ENCODE measurements at regions of chr17 and their contacts with region 1.

Region 1: DNA sequence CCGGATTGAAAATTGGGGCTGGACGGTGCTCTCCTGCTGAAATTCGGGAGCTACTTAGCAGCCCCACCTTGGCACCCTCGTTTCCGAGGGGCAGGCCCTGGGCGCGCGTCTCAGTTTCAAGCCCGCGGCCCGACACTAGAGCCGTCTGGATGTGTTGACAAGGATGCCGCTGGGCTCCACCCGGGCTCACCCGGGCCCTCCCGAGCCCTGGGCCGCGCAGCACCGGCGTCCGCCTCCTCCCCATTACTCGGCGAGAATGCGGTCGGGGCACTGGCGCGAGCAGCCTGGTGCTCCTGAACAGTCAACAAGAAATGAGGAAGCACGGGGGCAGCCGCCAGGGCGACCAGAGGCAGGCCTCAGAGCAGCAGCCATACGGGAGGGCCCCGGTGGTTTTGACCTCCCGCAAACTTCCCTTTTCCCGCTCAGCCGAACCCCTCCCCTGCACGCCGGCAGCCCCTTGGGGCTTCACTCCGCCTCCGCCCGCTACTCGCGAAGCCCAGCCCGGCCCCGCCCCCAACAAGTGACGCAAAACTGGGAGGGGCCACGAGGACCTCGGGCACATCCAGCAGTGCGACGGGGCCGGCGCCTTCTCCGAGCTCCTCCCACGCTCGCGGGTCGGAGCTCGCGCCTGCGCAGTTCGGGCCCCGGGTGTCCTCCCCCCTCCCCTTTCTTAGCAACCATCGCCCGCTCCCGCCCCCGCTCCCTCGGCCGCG is 447 bp upstream of the SEC14L1 start:
- DNase-seq: peak; percentile 96
- ATAC-seq: peak; percentile 97
- H3K4me3 ChIP-seq: peak overlapping the region; percentile 56
- H3K27ac ChIP-seq: peak overlapping the region; percentile 93
- H3K4me1 ChIP-seq: peaks cover 10% of the 10 kb centered on the region
- H3K27me3 ChIP-seq: no peaks in the 10 kb centered on the region
- CTCF ChIP-seq: no peak
- POLR2A ChIP-seq: peak; percentile 84
- RAD21 ChIP-seq: 0 out of 2 replicates have a peak, but pooled peaks have one; percentile 3

Region 2: GRCh38 chr17:77088455-77089123 is 51.7 kb before region 1 on chr17:
- CTCF ChIA-PET with region 1: interaction called, 3 read pairs
- POLR2A ChIA-PET with region 1: interaction called, 11 read pairs
- dilution Hi-C with region 1: no loop called
- in situ Hi-C with region 1: no loop called
- intact Hi-C with region 1: loop called (anchors 2 kb)
- DNase-seq: peak; percentile 98
- ATAC-seq: peak; percentile 95
- H3K4me3 ChIP-seq: peak overlapping the region; percentile 61
- H3K27ac ChIP-seq: peak overlapping the region; percentile 78
- H3K4me1 ChIP-seq: no peaks in the 10 kb centered on the region
- H3K27me3 ChIP-seq: peaks cover 2% of the 10 kb centered on the region; the same call in 1 of the 2 replicates
- CTCF ChIP-seq: peak; percentile 90
- POLR2A ChIP-seq: peak; percentile 62; the same call in 1 of the 2 replicates
- RAD21 ChIP-seq: peak; percentile 56

Region 3: DNA sequence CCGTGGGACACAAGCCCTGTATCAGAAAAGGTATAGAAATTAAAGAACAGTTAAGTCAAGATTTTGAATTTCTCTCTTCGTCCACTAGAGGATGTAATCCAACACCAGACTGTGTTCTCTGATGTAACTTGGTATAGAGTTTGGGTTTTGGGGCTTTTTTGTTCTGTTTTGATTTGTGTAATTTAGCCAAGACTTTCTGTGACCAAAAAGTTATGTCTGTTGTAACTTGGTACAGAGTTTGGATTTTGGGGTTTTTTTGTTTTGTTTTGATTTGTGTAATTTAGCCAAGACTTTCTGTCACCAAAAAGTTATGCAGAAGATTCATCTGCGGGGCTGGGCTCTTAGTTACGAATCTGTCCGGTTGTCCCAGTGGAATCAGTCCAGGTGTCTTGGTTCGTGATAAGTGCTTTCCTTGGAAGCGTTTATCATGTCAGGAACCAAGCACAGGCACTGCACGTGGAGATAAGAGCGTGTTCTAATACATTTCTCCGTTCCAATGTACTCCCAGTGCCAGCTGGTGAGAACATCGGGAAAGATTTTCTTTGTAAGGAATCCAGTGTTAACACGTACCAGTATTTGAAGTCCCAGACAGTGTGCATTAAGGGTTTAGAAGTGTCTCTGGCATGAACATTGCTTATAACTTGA is 43.6 kb before region 1 on chr17:
- CTCF ChIA-PET with region 1: no interaction called
- POLR2A ChIA-PET with region 1: no interaction called
- dilution Hi-C with region 1: no loop called
- in situ Hi-C with region 1: no loop called
- intact Hi-C with region 1: loop called (anchors 2 kb)
- DNase-seq: peak; percentile 73
- ATAC-seq: peak; percentile 83
- H3K4me3 ChIP-seq: no peak overlapping the region
- H3K27ac ChIP-seq: peak overlapping the region; percentile 28; the same call in 1 of the 2 replicates
- H3K4me1 ChIP-seq: peaks cover 8% of the 10 kb centered on the region; the same call in 1 of the 2 replicates
- H3K27me3 ChIP-seq: no peaks in the 10 kb centered on the region
- CTCF ChIP-seq: peak; percentile 79
- POLR2A ChIP-seq: no peak
- RAD21 ChIP-seq: peak; percentile 79

Region 4: GRCh38 chr17:77124192-77124889 is 16.0 kb before region 1 on chr17:
- CTCF ChIA-PET with region 1: no interaction called
- POLR2A ChIA-PET with region 1: interaction called, 18 read pairs
- dilution Hi-C with region 1: no loop called
- in situ Hi-C with region 1: no loop called
- intact Hi-C with region 1: no loop called
- DNase-seq: peak; percentile 68
- ATAC-seq: peak; percentile 7; the same call in 1 of the 2 replicates
- H3K4me3 ChIP-seq: no peak overlapping the region
- H3K27ac ChIP-seq: peak overlapping the region; percentile 58
- H3K4me1 ChIP-seq: peaks cover 26% of the 10 kb centered on the region
- H3K27me3 ChIP-seq: no peaks in the 10 kb centered on the region
- CTCF ChIP-seq: no peak
- POLR2A ChIP-seq: no peak
- RAD21 ChIP-seq: no peak

Region 5: GRCh38 chr17:77164483-77165091 is 24.3 kb after region 1 on chr17:
- CTCF ChIA-PET with region 1: no interaction called
- POLR2A ChIA-PET with region 1: no interaction called
- dilution Hi-C with region 1: no loop called
- in situ Hi-C with region 1: no loop called
- intact Hi-C with region 1: no loop called
- DNase-seq: peak; percentile 53
- ATAC-seq: peak; percentile 55
- H3K4me3 ChIP-seq: no peak overlapping the region
- H3K27ac ChIP-seq: peak overlapping the region; percentile 25; the same call in 1 of the 2 replicates
- H3K4me1 ChIP-seq: peaks cover 17% of the 10 kb centered on the region
- H3K27me3 ChIP-seq: no peaks in the 10 kb centered on the region
- CTCF ChIP-seq: no peak
- POLR2A ChIP-seq: no peak
- RAD21 ChIP-seq: no peak

Measured in IMR-90 (cell line).